Heart left ventricle (tissue), 16 donors: ENCODE measurements at regions of chr22 and their contacts with region 1.

Region 1: DNA sequence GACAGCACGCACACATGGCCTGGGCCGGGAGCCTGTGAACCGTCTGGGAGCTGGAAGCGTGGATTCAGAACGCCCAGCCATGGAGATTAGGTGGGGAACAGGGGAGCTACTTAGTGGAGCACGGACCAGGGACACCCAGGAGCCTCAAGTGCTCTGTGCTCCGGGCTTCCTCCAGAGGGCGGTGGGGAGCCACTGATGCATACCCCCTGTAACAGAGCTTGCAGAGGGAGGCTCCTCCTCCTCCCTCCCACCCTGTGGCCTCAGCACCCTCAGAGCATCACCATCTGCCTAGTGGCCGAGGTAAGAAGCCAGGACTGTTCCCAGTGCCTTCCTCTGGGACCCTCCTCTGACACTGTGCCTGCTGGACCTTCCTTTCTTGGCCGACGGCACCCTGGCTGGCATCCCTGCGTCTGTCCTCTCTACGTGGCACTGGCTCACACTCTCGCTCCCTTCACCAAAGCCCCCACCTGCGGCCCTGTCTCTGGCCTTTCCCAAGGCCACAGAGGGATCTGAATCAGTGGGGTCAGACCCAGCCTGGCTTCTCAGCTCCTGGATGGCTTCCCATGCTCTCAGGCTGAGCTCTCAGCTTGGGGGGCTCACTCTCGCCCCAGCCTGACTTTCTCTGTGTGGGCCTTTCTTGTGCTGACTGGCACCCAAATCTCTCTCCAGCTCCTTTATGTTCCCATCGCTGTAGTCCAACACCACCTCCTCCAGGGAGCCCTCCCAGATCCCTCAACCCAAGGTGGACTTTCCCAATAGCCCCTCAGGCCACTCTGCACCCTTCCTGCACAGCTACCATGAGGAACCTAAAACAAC is 780.9 kb downstream of the BRD1 start:
- DNase-seq: peak in 1 of 5 donors; percentile 51
- ATAC-seq: peak in 3 of 4 donors; percentile 69 to 78 (median 77)
- H3K4me3 ChIP-seq: no peak overlapping the region
- H3K27ac ChIP-seq: no peak overlapping the region
- H3K4me1 ChIP-seq: no peaks in the 10 kb centered on the region
- H3K27me3 ChIP-seq: peaks cover 0 to 25% (median 3%) of the 10 kb centered on the region in 9 donors
- CTCF ChIP-seq: peak; percentile 18 to 55 (median 46)
- POLR2A ChIP-seq: no peak

Region 2: GRCh38 chr22:49084206-49084605 is 37.5 kb after region 1 on chr22:
- intact Hi-C with region 1: no loop called
- DNase-seq: no peak
- ATAC-seq: no peak
- H3K4me3 ChIP-seq: no peak overlapping the region
- H3K27ac ChIP-seq: no peak overlapping the region
- H3K4me1 ChIP-seq: no peaks in the 10 kb centered on the region
- H3K27me3 ChIP-seq: peaks cover 0 to 37% (median 2%) of the 10 kb centered on the region in 9 donors
- CTCF ChIP-seq: no peak
- POLR2A ChIP-seq: no peak

Region 3: GRCh38 chr22:49632199-49633009 is 585.6 kb after region 1 on chr22:
- intact Hi-C with region 1: loop called in 2 of 10 experiments (anchors 5 kb)
- DNase-seq: peak; percentile 48 to 81 (median 56)
- ATAC-seq: peak; percentile 69 to 86 (median 78)
- H3K4me3 ChIP-seq: peak overlapping the region in 11 of 12 donors; percentile 12 to 53 (median 44)
- H3K27ac ChIP-seq: peak overlapping the region in 4 of 12 donors; percentile 12 to 33 (median 26)
- H3K4me1 ChIP-seq: peaks cover 0 to 14% (median 11%) of the 10 kb centered on the region in 12 donors
- H3K27me3 ChIP-seq: no peaks in the 10 kb centered on the region
- CTCF ChIP-seq: peak; percentile 62 to 94 (median 82)
- POLR2A ChIP-seq: no peak